B cell (primary cell): ENCODE measurements at regions of chr1 and their contacts with region 1.

Region 1: DNA sequence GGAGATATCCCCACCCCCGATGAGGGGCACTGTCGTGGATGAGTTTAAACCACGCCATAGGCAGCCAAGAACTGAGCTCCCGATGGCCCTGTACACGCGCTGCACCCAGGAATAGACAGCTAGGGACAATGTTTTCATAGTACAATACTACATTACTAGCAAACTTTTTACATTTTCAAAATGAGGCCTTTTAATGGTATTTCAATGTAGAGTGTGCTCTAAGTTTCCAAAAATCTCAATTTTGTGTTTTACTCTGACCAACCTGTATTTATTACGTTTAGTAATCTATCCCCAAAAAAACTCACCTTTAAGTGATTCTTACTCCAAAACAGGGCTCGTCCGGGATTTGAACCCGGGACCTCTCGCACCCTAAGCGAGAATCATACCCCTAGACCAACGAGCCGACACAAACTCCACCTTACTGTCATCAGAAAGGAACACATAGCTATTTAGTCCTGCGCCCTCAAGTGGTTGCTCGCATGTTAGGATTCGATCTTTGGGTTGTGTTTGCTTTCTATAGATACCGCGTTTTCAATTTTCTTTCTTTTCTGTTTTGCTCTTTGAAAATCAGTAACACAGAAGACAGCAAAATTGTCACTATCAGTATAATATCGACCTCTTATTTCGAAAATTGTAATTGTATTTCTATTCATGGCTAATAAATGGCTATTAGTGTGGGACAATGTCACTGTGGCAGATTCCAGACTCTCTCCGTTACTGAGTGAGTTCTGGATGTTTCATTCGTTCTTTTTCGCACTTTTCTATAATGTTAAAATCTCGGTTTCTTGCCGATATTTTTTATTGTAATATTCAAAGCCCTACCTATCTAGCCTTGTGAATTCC is 6.4 kb upstream of the MPZL1 start:
- DNase-seq: peak; percentile 94
- ATAC-seq: peak; percentile 58
- H3K4me3 ChIP-seq: peak overlapping the region; percentile 80 to 94 (median 91)
- H3K4me3 Mint-ChIP-seq: peak overlapping the region; percentile 93
- H3K27ac ChIP-seq: peak overlapping the region in 1 of 2 donors; percentile 54
- H3K27ac Mint-ChIP-seq: peak overlapping the region; percentile 98
- H3K4me1 ChIP-seq: peaks cover 37 to 41% of the 10 kb centered on the region in 2 donors
- H3K4me1 Mint-ChIP-seq: peaks cover 44% of the 10 kb centered on the region
- H3K27me3 ChIP-seq: no peaks in the 10 kb centered on the region
- H3K27me3 Mint-ChIP-seq: no peaks in the 10 kb centered on the region
- CTCF ChIP-seq: peak; percentile 85

Region 2: GRCh38 chr1:167553136-167554027 is 162.0 kb before region 1 on chr1 and contains the start of gene CREG1:
- CTCF ChIA-PET with region 1: interaction called, 4 read pairs
- POLR2A ChIA-PET with region 1: interaction called, 3 read pairs
- intact Hi-C with region 1: loop called (anchors 5 kb)
- DNase-seq: peak; percentile 92
- ATAC-seq: peak; percentile 98
- H3K4me3 ChIP-seq: peak within 1 kb of the TSS; percentile 56 to 82 (median 68)
- H3K4me3 Mint-ChIP-seq: peak within 1 kb of the TSS; percentile 96
- H3K27ac ChIP-seq: no peak within 1 kb of the TSS
- H3K27ac Mint-ChIP-seq: peak within 1 kb of the TSS; percentile 82
- H3K4me1 ChIP-seq: peaks cover 10 to 23% of the 10 kb centered on the region in 2 donors
- H3K4me1 Mint-ChIP-seq: peaks cover 23% of the 10 kb centered on the region
- H3K27me3 ChIP-seq: no peaks in the 10 kb centered on the region
- H3K27me3 Mint-ChIP-seq: no peaks in the 10 kb centered on the region
- CTCF ChIP-seq: no peak
- total RNA-seq, gene CREG1: 8.1 and 8.4 TPM in 2 replicates

Region 3: GRCh38 chr1:167641786-167642500 is 73.4 kb before region 1 on chr1:
- CTCF ChIA-PET with region 1: no interaction called
- POLR2A ChIA-PET with region 1: interaction called, 10 read pairs
- intact Hi-C with region 1: no loop called
- DNase-seq: no peak
- ATAC-seq: no peak
- H3K4me3 ChIP-seq: no peak overlapping the region
- H3K4me3 Mint-ChIP-seq: peak overlapping the region; percentile 5
- H3K27ac ChIP-seq: peak overlapping the region in 1 of 2 donors; percentile 50
- H3K27ac Mint-ChIP-seq: peak overlapping the region; percentile 28
- H3K4me1 ChIP-seq: peaks cover 73 to 79% of the 10 kb centered on the region in 2 donors
- H3K4me1 Mint-ChIP-seq: peaks cover 91% of the 10 kb centered on the region
- H3K27me3 ChIP-seq: no peaks in the 10 kb centered on the region
- H3K27me3 Mint-ChIP-seq: no peaks in the 10 kb centered on the region
- CTCF ChIP-seq: no peak

Region 4: GRCh38 chr1:167752219-167752985 is 37.0 kb after region 1 on chr1:
- CTCF ChIA-PET with region 1: interaction called, 17 read pairs
- POLR2A ChIA-PET with region 1: interaction called, 4 read pairs
- intact Hi-C with region 1: no loop called
- DNase-seq: no peak
- ATAC-seq: no peak
- H3K4me3 ChIP-seq: peak overlapping the region in 1 of 5 experiments; percentile 41
- H3K4me3 Mint-ChIP-seq: peak overlapping the region; percentile 82
- H3K27ac ChIP-seq: peak overlapping the region; percentile 72 to 87
- H3K27ac Mint-ChIP-seq: peak overlapping the region; percentile 85
- H3K4me1 ChIP-seq: peaks cover 34 to 38% of the 10 kb centered on the region in 2 donors
- H3K4me1 Mint-ChIP-seq: peaks cover 64% of the 10 kb centered on the region
- H3K27me3 ChIP-seq: no peaks in the 10 kb centered on the region
- H3K27me3 Mint-ChIP-seq: no peaks in the 10 kb centered on the region
- CTCF ChIP-seq: no peak

Region 5: DNA sequence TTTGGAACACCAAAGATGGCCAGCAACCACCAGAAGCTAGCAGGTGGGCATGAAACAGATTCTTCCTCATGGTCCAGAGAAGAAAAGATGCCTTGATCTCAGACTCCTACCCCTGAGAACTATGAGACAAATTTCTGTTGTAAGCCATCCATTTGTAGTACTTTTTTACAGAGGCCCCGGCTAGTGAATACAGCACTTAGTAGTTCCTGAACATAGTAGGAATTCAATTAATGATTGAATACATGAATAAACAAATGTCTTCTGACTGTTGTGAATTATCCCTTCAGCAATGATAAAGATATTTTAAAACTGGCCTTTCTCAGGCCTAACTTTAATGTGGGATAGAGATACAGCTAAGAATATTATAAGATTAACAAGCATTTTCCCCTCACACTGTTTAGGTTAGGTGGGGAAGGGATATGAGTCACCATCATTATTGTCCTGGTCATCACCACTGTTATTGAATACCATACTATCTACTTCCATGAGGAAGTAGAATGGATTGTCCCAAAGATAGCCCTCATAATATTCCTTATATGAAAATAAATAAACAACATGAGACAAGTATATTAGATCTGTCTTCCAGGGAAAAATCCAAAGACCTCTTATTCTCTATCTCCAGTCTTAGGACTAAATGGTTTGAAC is 147.2 kb after region 1 on chr1:
- CTCF ChIA-PET with region 1: no interaction called
- POLR2A ChIA-PET with region 1: no interaction called
- intact Hi-C with region 1: no loop called
- DNase-seq: no peak
- ATAC-seq: no peak
- H3K4me3 ChIP-seq: no peak overlapping the region
- H3K4me3 Mint-ChIP-seq: no peak overlapping the region
- H3K27ac ChIP-seq: no peak overlapping the region
- H3K27ac Mint-ChIP-seq: no peak overlapping the region
- H3K4me1 ChIP-seq: no peaks in the 10 kb centered on the region
- H3K4me1 Mint-ChIP-seq: no peaks in the 10 kb centered on the region
- H3K27me3 ChIP-seq: no peaks in the 10 kb centered on the region
- H3K27me3 Mint-ChIP-seq: no peaks in the 10 kb centered on the region
- CTCF ChIP-seq: no peak

Region 6: GRCh38 chr1:168082008-168082876 is 366.9 kb after region 1 on chr1:
- CTCF ChIA-PET with region 1: interaction called, 8 read pairs
- POLR2A ChIA-PET with region 1: no interaction called
- intact Hi-C with region 1: loop called (anchors 10 kb)
- DNase-seq: peak; percentile 63
- ATAC-seq: peak; percentile 86
- H3K4me3 ChIP-seq: no peak overlapping the region
- H3K4me3 Mint-ChIP-seq: no peak overlapping the region
- H3K27ac ChIP-seq: no peak overlapping the region
- H3K27ac Mint-ChIP-seq: no peak overlapping the region
- H3K4me1 ChIP-seq: peaks cover 0 to 5% of the 10 kb centered on the region in 2 donors
- H3K4me1 Mint-ChIP-seq: peaks cover 2% of the 10 kb centered on the region
- H3K27me3 ChIP-seq: no peaks in the 10 kb centered on the region
- H3K27me3 Mint-ChIP-seq: no peaks in the 10 kb centered on the region
- CTCF ChIP-seq: peak; percentile 86